Psoas muscle (tissue), 8 donors: ENCODE measurements at regions of chr19 and their contacts with region 1.

Region 1: DNA sequence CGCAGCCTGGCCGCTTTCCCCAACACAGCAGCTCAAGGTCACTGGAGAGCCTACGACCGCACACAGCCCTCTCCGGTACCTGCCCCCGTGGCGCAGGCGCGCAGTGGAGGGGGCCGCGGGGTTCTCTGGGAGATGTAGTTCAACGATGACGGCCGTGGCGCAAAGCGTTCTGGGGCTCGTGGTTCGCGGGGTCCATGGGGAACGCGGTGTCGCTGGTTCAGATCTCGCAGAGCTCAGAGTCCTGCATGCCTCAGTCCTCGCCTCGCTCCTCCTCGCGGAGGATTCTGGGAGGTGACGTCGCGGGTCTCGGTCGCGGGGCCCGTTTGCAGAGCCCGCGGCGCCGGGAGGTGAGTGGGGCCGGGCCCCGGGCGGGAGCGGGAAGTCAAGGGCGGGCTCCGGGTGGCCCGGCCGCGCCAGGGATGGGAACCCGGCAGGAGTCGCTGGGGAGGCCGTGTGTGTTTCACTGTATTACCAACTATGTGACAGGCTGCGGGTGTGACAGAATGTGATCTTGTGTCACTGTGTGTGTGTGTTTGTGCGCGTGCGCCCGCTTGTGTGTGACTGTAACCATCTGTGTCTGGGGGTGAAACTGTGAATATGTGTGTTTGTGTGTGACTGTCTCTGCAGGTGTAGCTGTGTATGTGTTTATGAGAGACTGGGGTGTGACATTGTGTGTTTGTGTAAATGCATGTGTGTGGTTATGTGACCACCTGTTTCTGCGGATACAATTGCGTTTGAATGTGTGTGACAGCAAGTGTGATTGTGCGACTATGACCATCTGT is at the start of gene ZNF527:
- DNase-seq: peak; percentile 98
- ATAC-seq: peak; percentile 99 to 100 (median 100)
- H3K4me3 ChIP-seq: peak within 1 kb of the TSS; percentile 82
- H3K27ac ChIP-seq: peak within 1 kb of the TSS; percentile 89
- H3K4me1 ChIP-seq: no peaks in the 10 kb centered on the region
- H3K27me3 ChIP-seq: no peaks in the 10 kb centered on the region
- CTCF ChIP-seq: no peak
- total RNA-seq, gene ZNF527: 1.8 to 4.0 (median 3.6) TPM

Region 2: GRCh38 chr19:36772311-36773222 is 598.5 kb before region 1 on chr19 and contains the start of gene ZNF850:
- intact Hi-C with region 1: loop called in 1 of 2 experiments (anchors 5 kb)
- DNase-seq: peak; percentile 93 to 96
- ATAC-seq: peak; percentile 97 to 99 (median 98)
- H3K4me3 ChIP-seq: peak within 1 kb of the TSS; percentile 99
- H3K27ac ChIP-seq: peak within 1 kb of the TSS; percentile 94
- H3K4me1 ChIP-seq: peaks cover 14% of the 10 kb centered on the region
- H3K27me3 ChIP-seq: no peaks in the 10 kb centered on the region
- CTCF ChIP-seq: no peak
- total RNA-seq, gene ZNF850: 0.27 to 1.1 (median 0.61) TPM